ENCODE measurements at regions of chr6 and their contacts with region 1.

Region 1: GRCh38 chr6:36985808-36986703 is at the start of gene MTCH1:
- DNase-seq: peak; percentile 93 to 95 (median 94)
- ATAC-seq: peak; percentile 91 to 96 (median 94)
- H3K4me3 ChIP-seq: peak within 1 kb of the TSS; percentile 91 to 100 (median 98)
- H3K27ac ChIP-seq: peak within 1 kb of the TSS; percentile 89 to 100 (median 98)
- H3K4me1 ChIP-seq: peaks cover 8 to 51% (median 46%) of the 10 kb centered on the region in 12 donors
- H3K27me3 ChIP-seq: no peaks in the 10 kb centered on the region
- CTCF ChIP-seq: peak in 1 of 12 donors; percentile 16
- POLR2A ChIP-seq: peak; percentile 68 to 96
- total RNA-seq, gene MTCH1: 144 to 320 (median 193) TPM

Region 2: DNA sequence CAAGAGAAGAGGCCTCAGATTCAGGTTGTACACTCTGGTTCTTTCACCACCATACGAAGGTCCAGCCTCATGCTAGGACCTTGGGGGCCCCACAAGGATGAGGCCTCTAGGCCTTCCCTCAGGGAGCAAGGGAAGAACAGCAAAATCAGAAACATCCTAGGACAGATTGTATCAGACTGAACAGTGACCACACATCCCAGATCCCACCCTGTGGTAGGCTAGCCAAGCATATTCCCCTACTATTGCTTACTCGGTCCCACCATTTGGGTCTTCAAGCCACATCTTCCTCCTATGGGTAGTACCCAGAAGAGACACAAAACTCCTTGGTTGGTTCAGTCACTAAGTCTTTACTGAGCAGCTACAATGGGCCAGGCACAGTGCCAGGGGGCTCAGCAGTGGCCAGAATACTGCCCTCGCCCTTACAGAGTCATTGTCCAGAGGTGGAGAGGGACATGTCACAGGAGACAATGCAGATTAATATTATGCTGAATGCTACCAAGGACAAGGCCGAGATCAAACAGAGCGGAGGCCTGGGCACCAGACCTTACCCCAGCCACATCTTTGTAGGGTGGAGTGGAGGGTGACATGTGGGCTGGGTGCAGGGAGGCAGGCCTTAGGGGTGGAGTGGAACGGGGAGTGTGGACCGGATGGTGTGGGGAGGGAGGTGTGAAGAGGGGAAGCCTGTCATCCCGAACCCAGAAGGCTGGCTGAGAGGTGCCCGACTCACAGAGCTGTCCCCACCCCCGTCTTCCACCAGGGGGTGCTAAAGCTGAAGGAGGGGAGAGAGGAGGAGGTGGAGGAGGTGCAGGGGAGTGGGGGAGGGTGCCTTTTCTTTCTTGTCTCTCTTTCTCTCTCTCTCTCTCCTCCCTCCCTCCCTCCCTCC is 862.6 kb before region 1 on chr6:
- intact Hi-C with region 1: no loop called
- DNase-seq: peak; percentile 72 to 89 (median 80)
- ATAC-seq: peak; percentile 47 to 85 (median 80)
- H3K4me3 ChIP-seq: peak overlapping the region in 1 of 12 donors; percentile 1
- H3K27ac ChIP-seq: peak overlapping the region in 1 of 12 donors; percentile 63
- H3K4me1 ChIP-seq: peaks cover 0 to 75% (median 11%) of the 10 kb centered on the region in 12 donors
- H3K27me3 ChIP-seq: no peaks in the 10 kb centered on the region
- CTCF ChIP-seq: peak; percentile 37 to 67 (median 56)
- POLR2A ChIP-seq: no peak

Region 3: DNA sequence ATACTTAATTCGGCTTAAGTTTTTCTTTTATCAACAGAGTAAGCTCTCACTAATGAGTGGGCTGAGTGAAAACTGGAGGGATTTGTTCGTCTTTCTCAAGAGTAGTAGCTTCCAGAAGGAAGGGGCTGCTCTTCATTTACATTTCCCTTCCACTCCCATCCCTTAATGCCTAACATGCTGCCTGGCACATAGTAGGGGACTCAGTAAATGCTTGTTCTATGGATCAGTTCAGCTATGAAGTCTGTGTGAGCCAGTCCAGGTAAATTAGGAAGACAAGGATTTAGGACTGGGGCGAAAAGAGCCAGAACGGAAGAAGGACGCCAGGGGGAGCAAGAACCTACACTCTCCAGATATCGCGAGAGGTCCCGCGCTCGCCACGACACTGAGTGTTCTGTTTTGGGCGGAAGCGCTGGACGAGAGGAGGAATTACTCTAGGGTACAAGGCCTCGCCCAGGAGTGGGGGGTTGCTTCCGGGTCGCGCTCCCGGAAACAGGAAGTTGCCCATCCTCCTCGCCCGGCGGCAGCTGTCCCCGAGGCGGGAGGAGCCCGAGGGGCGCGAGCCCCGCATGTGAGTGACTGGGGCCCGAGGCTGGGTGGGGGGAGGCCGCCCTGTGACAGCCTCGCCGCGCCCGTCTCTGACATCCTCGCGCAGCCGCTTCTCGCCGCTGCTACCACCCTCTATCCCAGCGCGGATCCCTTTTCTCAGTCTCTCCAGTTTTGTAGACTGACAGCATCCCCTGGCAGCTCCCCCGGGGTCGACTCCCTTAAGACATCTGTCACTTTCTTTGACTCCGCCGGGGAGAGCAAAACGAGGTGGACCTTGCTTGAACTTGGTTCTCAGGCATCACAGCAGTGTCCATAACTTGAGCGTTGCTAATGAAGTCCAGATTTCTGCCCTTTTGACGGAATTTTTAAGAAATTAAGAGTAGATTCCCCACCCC is 100.3 kb before region 1 on chr6 and contains the start of gene C6orf89:
- intact Hi-C with region 1: loop called in 5 of 10 experiments (anchors 2 to 10 kb)
- DNase-seq: peak; percentile 97 to 99 (median 98)
- ATAC-seq: peak; percentile 99 to 100 (median 100)
- H3K4me3 ChIP-seq: peak within 1 kb of the TSS; percentile 52 to 93 (median 83)
- H3K27ac ChIP-seq: peak within 1 kb of the TSS; percentile 77 to 95 (median 88)
- H3K4me1 ChIP-seq: peaks cover 0 to 42% (median 26%) of the 10 kb centered on the region in 12 donors
- H3K27me3 ChIP-seq: no peaks in the 10 kb centered on the region
- CTCF ChIP-seq: peak; percentile 73 to 94 (median 87)
- POLR2A ChIP-seq: peak in 1 of 2 donors; percentile 75
- total RNA-seq, gene C6orf89: 54.2 to 86.2 (median 75.5) TPM

Region 4: GRCh38 chr6:37051138-37052026 is 65.3 kb after region 1 on chr6:
- intact Hi-C with region 1: no loop called
- DNase-seq: peak; percentile 89 to 95 (median 90)
- ATAC-seq: peak; percentile 41 to 86 (median 81)
- H3K4me3 ChIP-seq: peak overlapping the region in 1 of 12 donors; percentile 36
- H3K27ac ChIP-seq: peak overlapping the region in 2 of 12 donors; percentile 32 to 93
- H3K4me1 ChIP-seq: peaks cover 0 to 55% (median 14%) of the 10 kb centered on the region in 12 donors
- H3K27me3 ChIP-seq: no peaks in the 10 kb centered on the region
- CTCF ChIP-seq: peak; percentile 82 to 96 (median 90)
- POLR2A ChIP-seq: no peak

Measured in heart left ventricle (tissue), 16 donors.